Heart right ventricle (tissue), 16 donors: ENCODE measurements at regions of chr1 and their contacts with region 1.

Region 1: GRCh38 chr1:202926720-202927491 is at the start of gene KLHL12:
- DNase-seq: peak; percentile 96 to 97
- ATAC-seq: peak; percentile 99 to 100 (median 99)
- H3K4me3 ChIP-seq: peak within 1 kb of the TSS; percentile 66 to 98 (median 82)
- H3K27ac ChIP-seq: peak within 1 kb of the TSS; percentile 86 to 96 (median 95)
- H3K4me1 ChIP-seq: peaks cover 2 to 48% (median 18%) of the 10 kb centered on the region in 9 donors
- H3K27me3 ChIP-seq: no peaks in the 10 kb centered on the region
- CTCF ChIP-seq: peak in 8 of 9 donors; percentile 27 to 70 (median 60)
- total RNA-seq, gene KLHL12: 15.1 to 31.5 (median 22.7) TPM

Region 2: GRCh38 chr1:202888531-202889360 is 38.2 kb before region 1 on chr1 and contains the start of gene RABIF:
- intact Hi-C with region 1: loop called in 2 of 10 experiments (anchors 2 to 5 kb)
- DNase-seq: peak; percentile 96 to 97
- ATAC-seq: peak; percentile 98 to 99 (median 99)
- H3K4me3 ChIP-seq: peak within 1 kb of the TSS; percentile 59 to 88 (median 74)
- H3K27ac ChIP-seq: peak within 1 kb of the TSS; percentile 70 to 98 (median 95)
- H3K4me1 ChIP-seq: peaks cover 0 to 18% (median 13%) of the 10 kb centered on the region in 9 donors
- H3K27me3 ChIP-seq: no peaks in the 10 kb centered on the region
- CTCF ChIP-seq: peak in 6 of 9 donors; percentile 10 to 59 (median 37)
- total RNA-seq, gene RABIF: 3.2 to 6.0 (median 4.8) TPM

Region 3: GRCh38 chr1:202968840-202969295 is 42.0 kb after region 1 on chr1:
- intact Hi-C with region 1: loop called in 5 of 10 experiments (anchors 5 kb)
- DNase-seq: peak in 1 of 2 donors; percentile 63
- ATAC-seq: peak in 7 of 8 donors; percentile 18 to 33 (median 29)
- H3K4me3 ChIP-seq: peak overlapping the region in 1 of 10 donors; percentile 94
- H3K27ac ChIP-seq: peak overlapping the region in 6 of 10 donors; percentile 28 to 97 (median 74)
- H3K4me1 ChIP-seq: peaks cover 6 to 52% (median 41%) of the 10 kb centered on the region in 9 donors
- H3K27me3 ChIP-seq: no peaks in the 10 kb centered on the region
- CTCF ChIP-seq: peak; percentile 34 to 72 (median 64)

Region 4: DNA sequence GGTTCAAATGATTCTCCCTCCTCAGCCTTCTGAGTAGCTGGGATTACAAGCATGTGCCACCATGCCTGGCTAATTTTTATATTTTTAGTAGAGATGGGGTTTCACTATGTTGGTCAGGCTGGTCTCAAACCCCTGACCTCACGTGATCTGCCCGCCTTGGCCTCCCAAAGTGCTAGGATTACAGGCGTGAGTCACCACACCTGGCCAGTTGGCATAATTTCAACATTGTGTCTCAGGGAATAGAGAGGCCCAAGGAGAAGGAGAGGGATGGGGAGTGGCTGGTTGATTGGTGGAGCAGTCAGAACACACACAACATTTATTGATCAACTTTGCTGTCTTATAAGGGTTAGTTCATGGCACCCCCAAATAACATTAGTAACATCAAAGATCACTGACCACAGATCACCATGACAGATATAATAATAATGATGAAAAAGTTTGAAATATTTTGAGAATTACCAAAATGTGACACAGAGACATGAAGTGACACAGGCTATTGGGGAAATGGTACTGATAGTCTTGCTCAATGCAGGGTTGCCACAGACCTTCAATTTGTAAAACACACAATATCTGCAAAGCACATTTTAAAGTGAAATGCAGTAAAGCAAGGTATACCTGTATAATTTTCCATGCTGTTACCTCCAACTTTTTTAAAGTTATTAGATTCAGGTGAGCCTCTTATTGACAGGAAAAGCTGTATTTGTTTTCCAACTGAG is 56.0 kb after region 1 on chr1:
- intact Hi-C with region 1: loop called in 1 of 10 experiments (anchors 10 kb)
- DNase-seq: no peak
- ATAC-seq: no peak
- H3K4me3 ChIP-seq: no peak overlapping the region
- H3K27ac ChIP-seq: no peak overlapping the region
- H3K4me1 ChIP-seq: peaks cover 0 to 9% (median 0%) of the 10 kb centered on the region in 9 donors
- H3K27me3 ChIP-seq: peaks cover 0 to 24% (median 8%) of the 10 kb centered on the region in 7 donors
- CTCF ChIP-seq: no peak

Region 5: GRCh38 chr1:202998836-202999750 is 72.2 kb after region 1 on chr1:
- intact Hi-C with region 1: loop called in 7 of 10 experiments (anchors 2 to 10 kb)
- DNase-seq: peak in 1 of 2 donors; percentile 44
- ATAC-seq: peak in 2 of 8 donors; percentile 10 to 22
- H3K4me3 ChIP-seq: no peak overlapping the region
- H3K27ac ChIP-seq: no peak overlapping the region
- H3K4me1 ChIP-seq: peaks cover 0 to 6% (median 0%) of the 10 kb centered on the region in 9 donors
- H3K27me3 ChIP-seq: peaks cover 0 to 23% (median 16%) of the 10 kb centered on the region in 7 donors
- CTCF ChIP-seq: peak; percentile 70 to 87 (median 81)